Endothelial cell of umbilical vein (primary cell): ENCODE measurements at regions of chr10 and their contacts with region 1.

Region 1: DNA sequence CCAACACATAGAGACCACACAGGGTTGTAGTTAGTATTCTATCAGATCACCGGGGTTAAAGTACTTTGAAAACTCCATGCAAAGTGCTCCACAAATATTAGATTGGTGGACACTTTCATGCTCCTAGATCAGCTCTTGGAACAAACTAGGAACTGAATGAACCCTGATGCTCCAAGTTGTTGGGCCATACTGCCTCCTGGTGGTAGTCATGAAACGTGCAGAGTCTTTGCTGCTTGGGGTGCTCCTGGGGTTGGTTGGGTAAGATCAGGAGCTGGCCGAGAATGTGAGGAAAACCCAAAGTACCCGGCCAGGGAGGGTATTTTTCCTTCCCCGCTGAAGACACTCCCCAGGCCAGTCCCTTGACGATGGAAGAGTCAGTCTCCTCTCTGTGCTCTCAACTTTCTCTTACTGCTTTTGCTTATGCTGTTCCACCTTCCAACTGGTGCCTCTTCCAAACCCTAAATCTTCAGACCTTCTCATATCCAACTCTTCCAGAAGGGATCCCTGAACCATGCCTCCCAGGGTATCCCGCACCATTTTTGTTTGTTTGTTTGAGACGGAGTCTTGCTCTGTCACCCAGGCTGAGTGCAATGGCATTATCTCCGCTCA is 920 bp upstream of the RPEL1 start:
- DNase-seq: peak; percentile 81
- H3K4me3 ChIP-seq: no peak overlapping the region
- H3K27ac ChIP-seq: no peak overlapping the region
- H3K4me1 ChIP-seq: peaks cover 8% of the 10 kb centered on the region
- H3K27me3 ChIP-seq: peaks cover 0 to 1% of the 10 kb centered on the region in 2 experiments
- CTCF ChIP-seq: peak; percentile 86 to 93
- POLR2A ChIP-seq: no peak

Region 2: GRCh38 chr10:102511583-102512274 is 733.0 kb before region 1 on chr10:
- CTCF ChIA-PET with region 1: no interaction called
- POLR2A ChIA-PET with region 1: no interaction called
- dilution Hi-C with region 1: no loop called
- intact Hi-C with region 1: no loop called
- DNase-seq: no peak
- H3K4me3 ChIP-seq: no peak overlapping the region
- H3K27ac ChIP-seq: no peak overlapping the region
- H3K4me1 ChIP-seq: peaks cover 12% of the 10 kb centered on the region
- H3K27me3 ChIP-seq: no peaks in the 10 kb centered on the region
- CTCF ChIP-seq: no peak
- POLR2A ChIP-seq: no peak

Region 3: GRCh38 chr10:102904346-102904745 is 340.4 kb before region 1 on chr10:
- CTCF ChIA-PET with region 1: interaction called, 28 read pairs
- POLR2A ChIA-PET with region 1: no interaction called
- dilution Hi-C with region 1: no loop called
- intact Hi-C with region 1: no loop called
- DNase-seq: no peak
- H3K4me3 ChIP-seq: no peak overlapping the region
- H3K27ac ChIP-seq: no peak overlapping the region
- H3K4me1 ChIP-seq: no peaks in the 10 kb centered on the region
- H3K27me3 ChIP-seq: no peaks in the 10 kb centered on the region
- CTCF ChIP-seq: no peak
- POLR2A ChIP-seq: no peak

Region 4: GRCh38 chr10:103069453-103070331 is 175.1 kb before region 1 on chr10:
- CTCF ChIA-PET with region 1: interaction called, 15 read pairs
- POLR2A ChIA-PET with region 1: no interaction called
- dilution Hi-C with region 1: no loop called
- intact Hi-C with region 1: no loop called
- DNase-seq: peak; percentile 56
- H3K4me3 ChIP-seq: no peak overlapping the region
- H3K27ac ChIP-seq: no peak overlapping the region
- H3K4me1 ChIP-seq: peaks cover 2% of the 10 kb centered on the region
- H3K27me3 ChIP-seq: no peaks in the 10 kb centered on the region
- CTCF ChIP-seq: peak; percentile 49 to 55
- POLR2A ChIP-seq: no peak

Region 5: DNA sequence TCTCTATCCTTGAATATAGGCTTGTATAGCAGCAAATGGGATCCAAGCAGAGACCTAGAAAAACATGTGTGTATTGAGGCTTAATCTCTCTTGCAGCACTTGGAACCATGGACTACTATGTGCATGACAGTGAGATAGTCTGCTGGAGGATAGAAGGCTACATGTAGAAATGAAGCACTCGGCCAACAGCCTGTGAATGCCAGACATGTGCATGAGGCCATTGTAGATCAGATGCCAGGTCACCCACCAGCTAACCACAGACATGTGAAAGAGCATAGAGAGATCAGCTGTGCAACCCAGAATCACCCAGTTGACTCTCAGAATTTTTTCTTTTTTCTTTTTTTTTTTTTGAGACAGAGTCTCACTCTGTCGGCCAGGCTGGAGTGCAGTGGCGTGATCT is 142.6 kb before region 1 on chr10:
- CTCF ChIA-PET with region 1: interaction called, 87 read pairs
- POLR2A ChIA-PET with region 1: no interaction called
- dilution Hi-C with region 1: no loop called
- intact Hi-C with region 1: loop called (anchors 5 kb)
- DNase-seq: no peak
- H3K4me3 ChIP-seq: no peak overlapping the region
- H3K27ac ChIP-seq: no peak overlapping the region
- H3K4me1 ChIP-seq: no peaks in the 10 kb centered on the region
- H3K27me3 ChIP-seq: no peaks in the 10 kb centered on the region
- CTCF ChIP-seq: no peak
- POLR2A ChIP-seq: no peak

Region 6: DNA sequence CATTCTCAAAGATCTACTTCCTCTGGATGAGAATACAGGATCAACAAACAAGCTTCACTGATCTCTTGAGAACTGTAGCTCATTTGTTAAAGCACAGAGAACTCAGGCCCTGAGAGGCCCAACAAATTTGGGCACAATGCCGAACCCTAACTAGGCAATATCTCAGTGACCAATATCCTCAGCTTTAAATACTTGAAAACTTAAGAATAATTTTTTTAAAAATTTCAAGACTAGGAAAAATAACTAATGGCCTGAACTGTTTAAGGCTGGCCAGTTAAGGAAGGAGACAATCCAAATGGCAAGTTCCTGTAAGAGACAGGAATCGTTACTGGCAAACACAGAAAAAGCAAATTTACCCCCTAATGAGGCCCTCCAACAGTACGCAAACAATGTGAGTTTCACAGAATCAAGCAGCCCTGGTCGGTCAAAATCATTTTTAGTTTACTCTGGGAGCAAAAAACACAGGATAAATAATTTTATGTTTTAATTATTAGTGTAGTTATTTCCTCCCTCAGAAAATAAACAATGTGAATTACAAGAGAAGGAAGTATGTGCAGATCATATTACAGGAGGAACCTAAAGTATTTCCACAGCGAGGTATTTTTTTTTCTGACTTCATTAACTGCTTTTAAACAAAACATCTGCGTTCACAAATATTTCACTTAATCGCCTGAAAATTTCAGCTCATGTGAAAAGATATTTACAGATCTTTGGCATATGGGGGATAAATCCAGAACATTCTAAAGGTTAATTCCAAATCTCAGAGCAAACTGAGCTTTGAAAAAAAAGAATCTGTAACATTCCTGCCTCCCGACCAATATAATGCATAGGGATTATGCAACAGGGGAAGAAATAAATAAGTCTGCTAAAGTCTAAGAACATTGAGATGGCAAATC is 91.2 kb before region 1 on chr10:
- CTCF ChIA-PET with region 1: interaction called, 55 read pairs
- POLR2A ChIA-PET with region 1: no interaction called
- dilution Hi-C with region 1: no loop called
- intact Hi-C with region 1: no loop called
- DNase-seq: peak; percentile 71
- H3K4me3 ChIP-seq: peak overlapping the region in 2 of 3 experiments; percentile 2 to 56
- H3K27ac ChIP-seq: peak overlapping the region; percentile 91
- H3K4me1 ChIP-seq: peaks cover 39% of the 10 kb centered on the region
- H3K27me3 ChIP-seq: no peaks in the 10 kb centered on the region
- CTCF ChIP-seq: no peak
- POLR2A ChIP-seq: no peak

Region 7: GRCh38 chr10:103192451-103193106 is 52.2 kb before region 1 on chr10:
- CTCF ChIA-PET with region 1: interaction called, 89 read pairs
- POLR2A ChIA-PET with region 1: interaction called, 3 read pairs
- dilution Hi-C with region 1: no loop called
- intact Hi-C with region 1: loop called (anchors 2 kb)
- DNase-seq: peak; percentile 90
- H3K4me3 ChIP-seq: peak overlapping the region; percentile 61 to 95 (median 71)
- H3K27ac ChIP-seq: peak overlapping the region; percentile 80
- H3K4me1 ChIP-seq: peaks cover 35% of the 10 kb centered on the region
- H3K27me3 ChIP-seq: no peaks in the 10 kb centered on the region
- CTCF ChIP-seq: no peak
- POLR2A ChIP-seq: peak; percentile 48

Region 8: DNA sequence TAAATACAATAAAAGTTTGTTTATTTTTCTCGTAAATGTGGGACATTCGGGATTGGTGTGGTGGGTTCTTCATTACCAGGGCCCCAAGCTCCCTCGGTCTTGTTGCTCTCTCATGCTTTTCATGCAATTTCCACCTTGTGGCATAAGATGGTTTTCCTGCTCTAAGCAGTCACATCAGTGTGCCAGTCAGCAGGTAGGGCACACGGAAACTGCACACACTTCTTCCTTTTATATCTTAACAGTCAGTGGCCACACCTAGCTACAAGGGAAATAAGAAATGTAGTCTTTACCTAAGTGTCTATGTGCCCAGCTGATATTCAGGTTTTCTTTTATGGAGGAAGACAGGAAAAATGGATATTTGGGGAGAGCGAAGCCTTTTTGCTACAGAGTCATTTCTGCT is 129.5 kb after region 1 on chr10:
- CTCF ChIA-PET with region 1: no interaction called
- POLR2A ChIA-PET with region 1: no interaction called
- dilution Hi-C with region 1: no loop called
- intact Hi-C with region 1: no loop called
- DNase-seq: no peak
- H3K4me3 ChIP-seq: no peak overlapping the region
- H3K27ac ChIP-seq: no peak overlapping the region
- H3K4me1 ChIP-seq: no peaks in the 10 kb centered on the region
- H3K27me3 ChIP-seq: no peaks in the 10 kb centered on the region
- CTCF ChIP-seq: no peak
- POLR2A ChIP-seq: no peak